ENCODE measurements at regions of chr15 and their contacts with region 1.

Region 1: DNA sequence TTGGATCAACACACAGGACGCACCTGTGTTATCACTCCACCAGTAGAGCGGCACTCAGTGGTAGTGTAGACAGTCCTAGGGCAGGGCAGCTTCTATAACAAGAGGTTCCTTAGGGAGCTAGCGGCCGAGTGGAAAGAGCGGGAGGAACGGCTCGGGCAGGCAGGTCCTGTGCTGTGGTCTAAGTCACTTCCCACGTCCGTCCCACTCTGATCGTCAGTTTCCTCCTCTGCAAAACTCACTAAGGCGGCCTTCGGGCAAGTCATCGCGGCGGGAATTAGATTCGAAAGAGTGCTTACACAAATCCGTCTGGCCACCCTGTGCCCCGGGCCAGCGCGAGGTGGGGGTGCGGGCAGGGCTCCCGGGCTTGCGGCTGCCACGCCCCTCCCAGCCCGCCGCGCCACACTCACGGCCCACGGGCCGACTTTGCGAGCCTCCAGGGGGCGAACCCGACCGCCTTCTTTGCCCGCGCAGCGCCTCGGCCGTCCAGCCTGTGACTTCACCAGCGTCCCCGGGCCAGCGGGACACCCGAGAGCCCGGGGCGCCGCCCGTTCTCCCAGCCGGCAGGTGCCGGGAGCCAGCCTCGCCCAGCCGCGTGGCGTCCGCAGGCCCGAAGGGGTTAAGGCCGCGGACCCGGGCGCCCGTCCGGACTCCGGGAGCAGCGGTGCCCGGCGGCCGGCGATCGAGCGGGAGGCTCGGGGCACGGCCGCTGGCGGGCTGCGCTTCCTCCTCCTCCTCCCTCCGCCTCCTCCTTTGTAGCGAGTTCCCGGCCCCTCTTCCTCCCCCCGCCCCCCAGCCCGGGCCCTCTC is 416 bp upstream of the CORO2B start:
- DNase-seq: peak; percentile 85 to 90 (median 88)
- H3K4me3 ChIP-seq: peak overlapping the region; percentile 67
- H3K27ac ChIP-seq: peak overlapping the region; percentile 94 to 96
- H3K4me1 ChIP-seq: peaks cover 15% of the 10 kb centered on the region
- H3K27me3 ChIP-seq: no peaks in the 10 kb centered on the region
- CTCF ChIP-seq: peak; percentile 73 to 95 (median 90)
- EP300 ChIP-seq: no peak
- POLR2A ChIP-seq: peak; percentile 20

Region 2: DNA sequence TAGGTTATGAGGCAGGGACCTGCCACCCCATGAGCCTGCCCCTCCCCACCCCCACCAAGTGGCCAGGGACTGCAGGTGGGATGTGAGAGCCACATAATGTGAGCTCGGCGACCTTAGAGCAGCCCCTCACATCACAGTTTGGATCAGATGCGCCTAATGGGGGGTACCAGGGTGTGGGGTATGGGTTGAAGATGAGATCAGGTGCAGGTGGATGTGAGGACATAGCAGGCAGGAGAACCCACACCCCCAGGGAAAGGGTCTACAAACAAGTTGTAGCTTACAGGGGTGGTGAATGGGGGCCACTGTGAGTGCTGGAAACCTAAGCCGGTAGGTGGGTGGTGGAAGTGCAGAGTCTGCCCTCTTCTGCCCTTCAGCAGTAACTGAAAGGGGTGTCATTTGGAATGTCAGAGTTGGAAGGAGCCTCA is 94.4 kb after region 1 on chr15:
- intact Hi-C with region 1: loop called (anchors 1 to 5 kb)
- DNase-seq: peak in 4 of 5 donors; percentile 27 to 41 (median 32)
- H3K4me3 ChIP-seq: no peak overlapping the region
- H3K27ac ChIP-seq: no peak overlapping the region
- H3K4me1 ChIP-seq: peaks cover 21% of the 10 kb centered on the region
- H3K27me3 ChIP-seq: no peaks in the 10 kb centered on the region
- CTCF ChIP-seq: peak in 2 of 3 donors; percentile 19 to 21
- EP300 ChIP-seq: no peak
- POLR2A ChIP-seq: no peak

Region 3: GRCh38 chr15:68900027-68900426 is 321.6 kb after region 1 on chr15:
- intact Hi-C with region 1: no loop called
- DNase-seq: no peak
- H3K4me3 ChIP-seq: no peak overlapping the region
- H3K27ac ChIP-seq: no peak overlapping the region
- H3K4me1 ChIP-seq: no peaks in the 10 kb centered on the region
- H3K27me3 ChIP-seq: no peaks in the 10 kb centered on the region
- CTCF ChIP-seq: no peak
- EP300 ChIP-seq: no peak
- POLR2A ChIP-seq: no peak